H1 (cell line): ENCODE measurements at regions of chr4 and their contacts with region 1.

Region 1: GRCh38 chr4:11966782-11967181 is 538.1 kb upstream of the HS3ST1 start:
- DNase-seq: no peak
- H3K4me3 ChIP-seq: no peak overlapping the region
- H3K27ac ChIP-seq: no peak overlapping the region
- H3K4me1 ChIP-seq: no peaks in the 10 kb centered on the region
- H3K27me3 ChIP-seq: no peaks in the 10 kb centered on the region
- CTCF ChIP-seq: no peak
- EP300 ChIP-seq: no peak
- POLR2A ChIP-seq: no peak
- RAD21 ChIP-seq: no peak

Region 2: DNA sequence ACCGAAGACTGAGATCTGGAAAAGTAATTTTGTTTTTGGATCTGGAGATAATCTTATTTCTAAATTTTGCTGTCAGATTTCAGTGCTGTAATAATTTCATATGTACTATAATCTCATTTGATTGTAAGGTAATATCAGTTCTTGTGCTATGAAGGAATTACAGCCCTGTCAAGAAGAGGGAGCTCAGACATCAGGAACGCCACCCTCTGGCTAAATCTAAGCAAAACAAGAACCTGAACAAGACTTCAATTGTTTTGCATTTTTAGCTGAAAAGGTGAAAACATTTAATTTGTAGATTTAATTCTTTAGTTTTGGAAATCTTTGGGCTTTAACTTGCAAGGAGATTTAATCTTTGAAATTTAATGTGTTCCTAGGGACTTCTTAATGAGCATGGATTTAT is 12.7 kb before region 1 on chr4:
- CTCF ChIA-PET with region 1: interaction called, 13 read pairs
- POLR2A ChIA-PET with region 1: no interaction called
- DNase-seq: peak in 1 of 2 experiments; percentile 19
- H3K4me3 ChIP-seq: no peak overlapping the region
- H3K27ac ChIP-seq: no peak overlapping the region
- H3K4me1 ChIP-seq: no peaks in the 10 kb centered on the region
- H3K27me3 ChIP-seq: no peaks in the 10 kb centered on the region
- CTCF ChIP-seq: peak in 2 of 3 experiments; percentile 40 to 52; a peak in 2 of 4 replicates
- EP300 ChIP-seq: no peak
- POLR2A ChIP-seq: no peak
- RAD21 ChIP-seq: peak; percentile 71 to 72

Region 3: DNA sequence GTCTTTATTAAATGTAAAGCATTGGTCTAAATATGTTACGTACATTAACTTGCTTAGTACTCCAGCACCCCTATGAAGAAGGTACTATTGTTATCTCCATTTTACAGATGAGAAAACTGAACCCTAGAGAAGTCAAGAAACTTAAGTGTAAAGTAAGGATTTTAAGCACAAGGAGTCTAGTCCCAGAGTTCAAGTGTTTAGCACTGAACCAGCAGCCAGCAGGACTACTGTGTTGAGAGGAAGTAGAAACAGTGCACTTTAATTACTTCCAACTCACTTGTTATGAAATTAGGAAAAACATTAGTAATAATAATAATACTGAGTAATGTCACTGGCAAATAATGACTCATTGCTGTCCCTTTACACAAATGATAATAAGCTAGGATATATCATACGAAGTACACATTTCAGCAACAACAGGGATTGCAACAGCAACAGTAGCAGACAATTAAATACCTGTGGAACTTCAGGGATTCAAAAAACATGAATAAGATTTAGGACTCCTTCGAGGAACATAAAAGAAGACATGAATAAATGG is 10.0 kb after region 1 on chr4:
- CTCF ChIA-PET with region 1: no interaction called
- POLR2A ChIA-PET with region 1: no interaction called
- DNase-seq: no peak
- H3K4me3 ChIP-seq: no peak overlapping the region
- H3K27ac ChIP-seq: no peak overlapping the region
- H3K4me1 ChIP-seq: peaks cover 0 to 2% (median 2%) of the 10 kb centered on the region in 4 experiments; a peak in 4 of 7 replicates
- H3K27me3 ChIP-seq: no peaks in the 10 kb centered on the region
- CTCF ChIP-seq: no peak
- EP300 ChIP-seq: no peak
- POLR2A ChIP-seq: no peak
- RAD21 ChIP-seq: no peak